ENCODE measurements at regions of chr4 and their contacts with region 1.

Region 1: GRCh38 chr4:99816545-99817308 is at the start of gene DAPP1:
- DNase-seq: peak; percentile 82 to 93 (median 87)
- H3K4me3 ChIP-seq: peak within 1 kb of the TSS; percentile 55 to 92
- H3K4me3 Mint-ChIP-seq: peak within 1 kb of the TSS; percentile 89 to 95 (median 91)
- H3K27ac ChIP-seq: peak within 1 kb of the TSS; percentile 69
- H3K27ac Mint-ChIP-seq: peak within 1 kb of the TSS; percentile 91 to 98 (median 97)
- H3K4me1 ChIP-seq: peaks cover 63% of the 10 kb centered on the region
- H3K4me1 Mint-ChIP-seq: peaks cover 44 to 61% (median 54%) of the 10 kb centered on the region in 4 donors
- H3K27me3 ChIP-seq: no peaks in the 10 kb centered on the region
- H3K27me3 Mint-ChIP-seq: no peaks in the 10 kb centered on the region
- total RNA-seq, gene DAPP1: 21.3 to 23.0 TPM

Region 2: GRCh38 chr4:99180382-99181070 is 636.2 kb before region 1 on chr4:
- CTCF ChIA-PET with region 1: no interaction called
- POLR2A ChIA-PET with region 1: no interaction called
- intact Hi-C with region 1: no loop called
- DNase-seq: no peak
- H3K4me3 ChIP-seq: no peak overlapping the region
- H3K4me3 Mint-ChIP-seq: no peak overlapping the region
- H3K27ac ChIP-seq: no peak overlapping the region
- H3K27ac Mint-ChIP-seq: no peak overlapping the region
- H3K4me1 ChIP-seq: no peaks in the 10 kb centered on the region
- H3K4me1 Mint-ChIP-seq: no peaks in the 10 kb centered on the region
- H3K27me3 ChIP-seq: no peaks in the 10 kb centered on the region
- H3K27me3 Mint-ChIP-seq: peaks cover 0 to 2% of the 10 kb centered on the region in 2 donors

Region 3: GRCh38 chr4:99855678-99856077 is 39.0 kb after region 1 on chr4:
- CTCF ChIA-PET with region 1: interaction called, 19 read pairs
- POLR2A ChIA-PET with region 1: interaction called, 20 read pairs
- intact Hi-C with region 1: loop called (anchors 1 kb)
- DNase-seq: no peak
- H3K4me3 ChIP-seq: no peak overlapping the region
- H3K4me3 Mint-ChIP-seq: peak overlapping the region in 7 of 8 donors; percentile 47 to 75 (median 67)
- H3K27ac ChIP-seq: peak overlapping the region; percentile 32
- H3K27ac Mint-ChIP-seq: peak overlapping the region; percentile 61 to 86 (median 71)
- H3K4me1 ChIP-seq: peaks cover 45% of the 10 kb centered on the region
- H3K4me1 Mint-ChIP-seq: peaks cover 30 to 50% (median 40%) of the 10 kb centered on the region in 4 donors
- H3K27me3 ChIP-seq: no peaks in the 10 kb centered on the region
- H3K27me3 Mint-ChIP-seq: no peaks in the 10 kb centered on the region

Region 4: DNA sequence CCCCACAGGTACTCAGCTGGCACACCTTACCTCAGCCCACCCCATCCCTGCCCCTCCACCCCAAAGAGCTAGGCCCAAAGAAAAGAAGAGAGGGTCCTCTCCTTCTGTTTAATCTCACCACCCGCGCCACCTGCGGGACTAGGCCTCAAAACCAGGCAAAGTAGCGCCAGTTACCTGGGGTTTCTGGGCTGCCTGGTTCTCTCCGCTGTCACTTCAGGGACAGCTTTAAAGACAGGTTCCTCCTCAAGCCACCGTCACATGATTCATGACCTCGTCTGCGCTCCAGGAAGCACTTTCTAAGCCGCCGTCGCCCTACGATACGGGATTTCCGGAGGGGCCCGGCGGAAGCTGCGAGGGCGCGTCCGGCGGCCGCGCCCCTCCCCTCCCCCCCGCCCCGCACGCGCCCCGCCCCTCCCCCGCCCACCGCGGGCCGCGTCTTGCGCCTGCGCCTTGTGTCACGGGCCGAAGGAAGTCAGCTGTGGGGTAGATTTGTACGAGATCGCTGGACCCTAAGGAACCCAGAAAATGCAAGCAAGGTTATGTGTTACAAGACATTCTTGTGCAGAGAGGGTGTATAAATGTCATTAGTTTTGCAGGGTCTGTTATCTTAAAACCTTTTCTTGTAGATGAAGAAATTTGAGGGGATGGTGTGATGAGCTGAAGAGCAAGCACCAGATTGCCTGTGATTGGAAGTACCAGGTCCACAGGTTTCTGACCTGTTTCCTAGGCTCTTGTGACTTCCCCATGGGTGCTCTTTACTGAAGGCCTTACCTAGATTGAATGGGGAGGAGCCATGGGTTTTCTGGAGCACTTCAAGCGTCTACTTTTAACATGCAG is 77.7 kb after region 1 on chr4 and contains the start of gene LAMTOR3:
- CTCF ChIA-PET with region 1: interaction called, 7 read pairs
- POLR2A ChIA-PET with region 1: interaction called, 23 read pairs
- intact Hi-C with region 1: loop called (anchors 1 kb)
- DNase-seq: peak; percentile 88 to 94 (median 92)
- H3K4me3 ChIP-seq: peak within 1 kb of the TSS; percentile 76 to 97
- H3K4me3 Mint-ChIP-seq: peak within 1 kb of the TSS; percentile 97 to 100 (median 98)
- H3K27ac ChIP-seq: peak within 1 kb of the TSS; percentile 87
- H3K27ac Mint-ChIP-seq: peak within 1 kb of the TSS; percentile 97 to 99 (median 99)
- H3K4me1 ChIP-seq: peaks cover 34% of the 10 kb centered on the region
- H3K4me1 Mint-ChIP-seq: peaks cover 27 to 47% (median 38%) of the 10 kb centered on the region in 4 donors
- H3K27me3 ChIP-seq: no peaks in the 10 kb centered on the region
- H3K27me3 Mint-ChIP-seq: no peaks in the 10 kb centered on the region
- total RNA-seq, gene LAMTOR3: 24.2 to 27.0 TPM